ENCODE measurements at regions of chr10 and their contacts with region 1.

Region 1: GRCh38 chr10:103966671-103967447 is at the start of gene SLK:
- DNase-seq: peak; percentile 75
- H3K4me3 Mint-ChIP-seq: peak within 1 kb of the TSS; percentile 89
- H3K27ac Mint-ChIP-seq: peak within 1 kb of the TSS; percentile 96
- H3K4me1 Mint-ChIP-seq: no peaks in the 10 kb centered on the region
- H3K27me3 Mint-ChIP-seq: no peaks in the 10 kb centered on the region
- CTCF ChIP-seq: no peak
- total RNA-seq, gene SLK: 57.3 and 71.9 TPM in 2 replicates

Region 2: DNA sequence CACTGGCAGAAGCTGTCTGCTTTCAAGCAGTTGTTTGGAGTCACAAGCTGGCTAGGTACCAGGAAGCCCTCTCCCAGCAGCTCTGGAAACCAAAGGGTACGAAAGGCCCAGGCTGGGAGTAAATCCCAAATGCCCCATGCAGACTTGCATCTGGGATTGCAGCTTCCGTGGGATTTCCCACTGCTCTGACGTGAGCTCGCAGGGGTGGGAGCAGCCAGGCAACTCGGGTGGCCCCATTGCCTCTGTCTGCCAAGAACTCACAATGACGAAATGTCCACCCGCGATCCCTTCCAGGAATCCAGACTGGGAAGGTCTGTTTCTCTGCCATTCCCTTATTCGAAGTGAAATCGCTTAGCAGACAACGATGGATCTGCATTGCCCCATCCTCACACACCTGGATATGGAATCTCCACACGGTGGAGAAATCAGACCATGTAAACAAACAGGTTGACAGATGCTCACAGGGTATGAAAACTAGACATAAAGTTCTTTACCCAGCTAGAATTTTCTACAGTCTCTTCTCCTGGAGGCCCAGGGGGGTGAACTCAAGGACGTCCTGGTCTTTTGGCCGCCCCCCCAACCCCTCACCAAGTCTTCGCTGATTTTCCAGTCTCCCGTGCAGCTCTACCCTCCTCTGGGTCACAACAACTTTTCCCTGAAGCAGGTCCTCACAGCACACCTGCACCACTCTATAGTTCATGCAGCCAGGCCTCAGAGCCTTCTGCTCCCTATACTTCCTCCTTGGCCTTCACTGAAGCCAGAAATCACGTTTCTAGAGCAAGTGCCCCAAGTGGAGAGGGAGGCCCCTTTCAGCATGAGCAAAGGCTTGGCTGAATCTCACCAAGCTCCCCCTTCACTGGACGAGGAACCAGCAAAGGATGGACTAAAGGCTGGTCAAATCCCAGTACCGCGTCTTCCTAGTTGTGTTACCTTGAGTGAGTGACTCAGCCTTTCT is 131.5 kb before region 1 on chr10:
- CTCF ChIA-PET with region 1: no interaction called
- POLR2A ChIA-PET with region 1: no interaction called
- intact Hi-C with region 1: no loop called
- DNase-seq: peak; percentile 20
- H3K4me3 Mint-ChIP-seq: no peak overlapping the region
- H3K27ac Mint-ChIP-seq: no peak overlapping the region
- H3K4me1 Mint-ChIP-seq: peaks cover 6% of the 10 kb centered on the region
- H3K27me3 Mint-ChIP-seq: no peaks in the 10 kb centered on the region
- CTCF ChIP-seq: no peak

Region 3: GRCh38 chr10:103870516-103870915 is 96.3 kb before region 1 on chr10:
- CTCF ChIA-PET with region 1: no interaction called
- POLR2A ChIA-PET with region 1: interaction called, 31 read pairs
- intact Hi-C with region 1: no loop called
- DNase-seq: peak; percentile 97
- H3K4me3 Mint-ChIP-seq: peak overlapping the region; percentile 70
- H3K27ac Mint-ChIP-seq: peak overlapping the region; percentile 97
- H3K4me1 Mint-ChIP-seq: peaks cover 29% of the 10 kb centered on the region
- H3K27me3 Mint-ChIP-seq: no peaks in the 10 kb centered on the region
- CTCF ChIP-seq: no peak

Region 4: DNA sequence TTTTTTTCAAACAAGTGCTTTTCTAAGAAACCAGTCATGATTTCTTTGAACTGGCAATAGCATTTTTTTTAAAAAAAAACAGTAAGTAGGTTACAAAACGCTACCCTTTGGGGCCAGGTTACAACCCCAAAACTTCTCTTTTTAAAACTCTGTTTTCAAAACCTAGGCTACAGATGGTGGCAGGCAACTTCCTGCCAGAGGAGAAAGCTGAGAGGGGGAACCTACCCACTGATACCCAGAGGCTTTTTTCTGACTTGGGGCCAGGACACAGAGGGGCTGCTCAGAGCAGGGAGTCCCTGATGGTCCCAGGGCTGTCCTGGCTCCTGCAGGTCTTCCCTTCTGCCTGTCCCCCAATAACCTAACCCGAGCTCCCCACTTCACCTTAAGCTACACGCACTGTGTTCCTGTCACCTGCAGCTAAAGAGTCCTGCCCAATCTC is 55.8 kb before region 1 on chr10:
- CTCF ChIA-PET with region 1: interaction called, 6 read pairs
- POLR2A ChIA-PET with region 1: interaction called, 158 read pairs
- intact Hi-C with region 1: loop called (anchors 2 kb)
- DNase-seq: no peak
- H3K4me3 Mint-ChIP-seq: peak overlapping the region; percentile 43
- H3K27ac Mint-ChIP-seq: peak overlapping the region; percentile 62
- H3K4me1 Mint-ChIP-seq: peaks cover 32% of the 10 kb centered on the region
- H3K27me3 Mint-ChIP-seq: no peaks in the 10 kb centered on the region
- CTCF ChIP-seq: no peak

Region 5: DNA sequence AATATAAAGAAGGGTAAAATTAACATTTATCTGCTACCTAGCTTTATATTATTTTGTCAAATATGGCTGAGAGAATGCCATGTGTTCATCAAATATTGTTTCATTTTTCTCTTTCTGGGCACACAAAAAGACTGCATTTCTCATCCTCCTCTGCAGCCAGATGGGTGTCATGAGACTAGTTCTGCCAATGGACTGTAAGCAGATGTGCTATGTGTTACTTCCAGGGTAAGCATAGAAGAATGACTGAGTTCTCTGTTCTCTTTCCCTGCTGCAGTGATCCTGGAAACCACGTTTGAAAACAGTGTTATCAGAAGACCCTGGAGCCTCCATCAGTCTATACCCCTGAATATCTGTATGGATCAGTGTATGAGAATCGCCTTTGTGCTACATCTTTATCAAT is 24.0 kb before region 1 on chr10:
- CTCF ChIA-PET with region 1: no interaction called
- POLR2A ChIA-PET with region 1: interaction called, 11 read pairs
- intact Hi-C with region 1: no loop called
- DNase-seq: no peak
- H3K4me3 Mint-ChIP-seq: no peak overlapping the region
- H3K27ac Mint-ChIP-seq: peak overlapping the region; percentile 37
- H3K4me1 Mint-ChIP-seq: peaks cover 11% of the 10 kb centered on the region
- H3K27me3 Mint-ChIP-seq: no peaks in the 10 kb centered on the region
- CTCF ChIP-seq: no peak

Region 6: DNA sequence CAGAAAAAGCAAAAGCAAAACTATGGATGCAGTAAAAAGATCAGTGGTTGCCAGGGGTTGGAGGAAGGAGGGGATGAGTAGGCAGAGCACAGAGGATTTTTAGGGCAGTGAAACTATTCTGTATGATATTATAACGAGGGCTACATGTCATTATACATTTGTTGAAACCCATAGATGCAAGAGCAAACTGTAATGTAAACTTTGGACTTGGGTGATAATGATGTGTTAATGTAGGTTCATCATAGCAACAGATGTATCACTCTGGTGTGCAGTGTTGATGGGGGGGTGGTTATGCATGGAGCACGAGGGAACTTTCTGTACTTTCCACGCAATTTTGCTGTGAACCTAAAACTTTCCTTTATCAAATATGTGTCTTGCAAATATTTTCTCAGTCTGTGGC is 23.3 kb after region 1 on chr10:
- CTCF ChIA-PET with region 1: interaction called, 3 read pairs
- POLR2A ChIA-PET with region 1: interaction called, 18 read pairs
- intact Hi-C with region 1: no loop called
- DNase-seq: no peak
- H3K4me3 Mint-ChIP-seq: no peak overlapping the region
- H3K27ac Mint-ChIP-seq: peak overlapping the region; percentile 2
- H3K4me1 Mint-ChIP-seq: peaks cover 22% of the 10 kb centered on the region
- H3K27me3 Mint-ChIP-seq: no peaks in the 10 kb centered on the region
- CTCF ChIP-seq: no peak

Measured in MCF 10A (cell line).